GM10248 (cell line): ENCODE measurements at regions of chr15 and their contacts with region 1.

Region 1: GRCh38 chr15:64112904-64113303 is 17.1 kb downstream of the SNX1 start:
- DNase-seq: no peak
- CTCF ChIP-seq: no peak

Region 2: DNA sequence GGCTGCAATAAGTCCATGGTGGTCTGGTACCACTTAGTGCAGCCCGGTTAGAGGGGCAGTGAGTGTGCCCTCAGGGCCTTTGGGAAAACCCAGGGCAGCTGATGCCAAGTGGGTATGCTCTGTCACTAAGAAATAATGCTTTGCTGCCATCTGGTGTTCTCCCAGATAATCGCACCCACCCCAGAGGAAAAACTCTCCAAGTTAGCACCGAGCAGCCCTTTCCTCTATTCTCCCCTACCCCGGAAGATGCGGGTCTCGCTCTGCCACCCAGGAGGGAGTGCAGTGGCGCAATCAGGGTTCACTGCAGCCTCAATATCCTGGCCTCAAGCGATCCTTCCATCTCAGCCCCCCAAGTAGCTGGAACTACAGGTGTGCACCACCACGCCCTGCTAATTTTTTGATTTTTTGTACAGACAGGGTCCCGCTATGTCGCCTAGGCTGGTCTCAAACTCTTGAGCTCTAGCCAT is 45.3 kb before region 1 on chr15:
- CTCF ChIA-PET with region 1: no interaction called
- POLR2A ChIA-PET with region 1: no interaction called
- DNase-seq: peak; percentile 78
- CTCF ChIP-seq: peak; percentile 70

Region 3: GRCh38 chr15:64093627-64094417 is 19.1 kb before region 1 on chr15 and contains the start of gene CIAO2A:
- CTCF ChIA-PET with region 1: interaction called, 18 read pairs
- POLR2A ChIA-PET with region 1: no interaction called
- DNase-seq: peak; percentile 88
- CTCF ChIP-seq: no peak

Region 4: GRCh38 chr15:64122936-64123351 is 10.0 kb after region 1 on chr15:
- CTCF ChIA-PET with region 1: interaction called, 23 read pairs
- POLR2A ChIA-PET with region 1: no interaction called
- DNase-seq: no peak
- CTCF ChIP-seq: no peak

Region 5: DNA sequence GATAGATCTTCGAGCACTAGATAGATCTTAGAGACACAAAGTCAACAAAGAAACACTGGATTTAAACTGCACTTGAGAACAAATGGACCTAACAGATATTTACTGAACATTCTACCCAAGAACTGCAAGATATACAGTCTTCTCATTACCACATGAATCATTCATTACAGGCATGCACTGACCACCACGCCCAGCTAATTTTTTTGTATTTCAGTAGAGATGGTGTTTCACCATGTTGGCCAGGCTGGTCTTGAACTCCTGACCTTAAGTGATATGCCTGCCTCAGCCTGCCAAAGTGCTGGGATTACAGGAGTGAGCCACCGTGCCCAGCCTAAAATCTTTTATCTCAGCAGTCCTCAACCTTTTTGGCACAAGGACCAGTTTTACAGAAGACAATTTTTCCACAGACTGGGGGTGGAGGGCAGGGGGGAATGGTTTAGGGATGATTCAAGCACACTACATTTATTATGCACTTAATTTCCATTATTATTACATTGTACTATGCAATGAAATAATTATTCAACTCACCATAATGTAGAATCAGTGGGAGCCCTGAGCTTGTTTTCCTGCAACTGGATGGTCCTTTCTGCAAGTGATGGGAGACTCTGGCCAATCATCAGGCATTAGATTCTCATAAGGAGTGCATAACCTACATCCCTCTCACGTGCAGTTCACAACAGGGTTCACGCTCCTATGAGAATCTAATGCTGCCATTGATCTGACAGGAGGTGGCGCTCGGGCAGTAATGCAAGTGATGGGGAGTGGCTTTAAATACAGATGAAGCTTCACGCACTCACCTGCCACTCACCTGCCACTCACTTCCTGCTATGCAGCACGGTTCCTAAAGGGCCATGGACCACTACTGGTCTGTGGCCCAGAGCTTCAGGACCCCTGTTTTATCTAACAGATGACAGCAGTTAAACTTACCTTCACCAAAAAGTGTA is 221.4 kb after region 1 on chr15:
- CTCF ChIA-PET with region 1: no interaction called
- POLR2A ChIA-PET with region 1: no interaction called
- DNase-seq: no peak
- CTCF ChIP-seq: no peak